ENCODE measurements at regions of chr21 and their contacts with region 1.

Region 1: DNA sequence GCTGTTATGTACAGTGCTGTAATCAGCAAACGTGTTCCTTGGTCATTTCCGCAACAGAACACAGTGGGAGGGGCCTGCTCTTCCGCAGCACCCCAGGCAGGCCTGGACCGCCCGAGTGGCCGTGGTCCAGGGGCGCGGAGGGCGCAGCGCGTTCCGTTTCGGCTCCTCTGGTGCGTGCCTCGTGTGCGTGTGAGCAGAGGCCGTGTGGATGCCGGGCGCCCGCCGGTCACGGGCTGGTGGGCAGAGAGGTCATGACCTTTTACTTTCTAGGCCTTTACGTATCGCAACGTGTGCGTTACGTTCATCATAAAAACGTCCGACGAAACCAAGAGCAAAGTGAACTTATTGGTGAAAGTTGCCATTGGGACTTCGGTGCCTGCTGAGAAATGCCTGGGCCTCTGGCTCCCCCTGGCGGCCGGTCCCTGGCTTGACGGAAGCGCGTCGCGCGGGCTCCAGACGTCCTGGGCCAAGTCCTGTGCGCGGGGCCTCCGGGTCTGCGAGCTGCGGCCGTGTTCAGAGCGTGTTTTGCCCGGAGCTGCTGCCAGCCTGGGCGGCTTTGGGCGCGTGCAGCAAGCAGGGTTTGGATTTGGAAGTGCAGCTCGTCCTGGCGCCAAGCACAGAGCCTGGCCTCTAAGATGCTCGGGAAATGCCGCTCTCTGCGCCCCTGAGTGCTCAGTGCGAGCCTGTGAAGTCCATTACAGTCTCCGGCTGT is 34.4 kb downstream of the COL18A1 start:
- DNase-seq: peak; percentile 63 to 82
- H3K4me3 ChIP-seq: peak overlapping the region; percentile 29 to 62 (median 43)
- H3K27ac ChIP-seq: peak overlapping the region; percentile 68 to 91
- H3K4me1 ChIP-seq: no peaks in the 10 kb centered on the region
- H3K27me3 ChIP-seq: no peaks in the 10 kb centered on the region
- CTCF ChIP-seq: peak; percentile 95 to 99 (median 97)
- POLR2A ChIP-seq: no peak

Region 2: GRCh38 chr21:45287438-45288391 is 151.6 kb before region 1 on chr21 and contains the start of gene POFUT2:
- intact Hi-C with region 1: loop called (anchors 2 kb)
- DNase-seq: peak; percentile 94 to 99
- H3K4me3 ChIP-seq: peak within 1 kb of the TSS; percentile 65 to 85 (median 75)
- H3K27ac ChIP-seq: peak within 1 kb of the TSS; percentile 86
- H3K4me1 ChIP-seq: peaks cover 8 to 9% of the 10 kb centered on the region in 2 donors
- H3K27me3 ChIP-seq: no peaks in the 10 kb centered on the region
- CTCF ChIP-seq: no peak
- POLR2A ChIP-seq: no peak
- total RNA-seq, gene POFUT2: 20.0 to 22.9 (median 22.1) TPM

Region 3: DNA sequence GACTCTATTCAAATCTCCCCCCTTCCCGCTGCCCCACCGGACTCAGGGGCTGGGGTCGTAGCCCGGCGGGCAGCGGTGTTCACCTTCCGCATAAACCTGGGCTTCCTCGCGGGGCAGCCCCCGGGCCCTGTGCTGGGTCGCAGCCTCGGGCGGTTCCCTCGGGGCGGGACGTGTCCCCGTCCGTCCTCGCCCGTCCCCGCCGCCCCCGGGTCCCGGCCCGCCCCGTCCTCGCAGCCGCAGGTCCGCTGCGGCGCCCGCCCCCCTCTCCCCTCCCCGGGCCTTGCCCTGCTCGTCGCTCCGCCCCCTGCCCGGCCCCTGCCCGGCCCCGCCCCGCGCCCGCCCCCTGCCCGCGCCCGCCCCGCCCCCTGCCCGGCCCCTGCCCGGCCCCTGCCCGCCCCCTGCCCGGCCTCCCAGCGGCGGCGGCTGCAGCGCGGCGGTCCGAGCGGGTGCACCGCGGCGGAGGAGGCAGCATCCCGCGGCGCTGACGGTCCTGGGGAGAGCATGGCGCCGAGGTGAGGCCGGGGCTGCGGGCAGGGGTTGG is 34.5 kb before region 1 on chr21 and contains the start of gene COL18A1:
- intact Hi-C with region 1: loop called (anchors 5 kb)
- DNase-seq: no peak
- H3K4me3 ChIP-seq: peak within 1 kb of the TSS; percentile 52 to 91 (median 71)
- H3K27ac ChIP-seq: peak within 1 kb of the TSS; percentile 78 to 94
- H3K4me1 ChIP-seq: peaks cover 22 to 23% of the 10 kb centered on the region in 2 donors
- H3K27me3 ChIP-seq: no peaks in the 10 kb centered on the region
- CTCF ChIP-seq: no peak
- POLR2A ChIP-seq: no peak
- total RNA-seq, gene COL18A1: 48.3 to 62.9 (median 55.8) TPM

Measured in breast epithelium (tissue), 4 donors.